ENCODE measurements at regions of chr2 and their contacts with region 1.

Region 1: GRCh38 chr2:43226558-43226954 is at the start of gene ZFP36L2:
- DNase-seq: peak; percentile 97
- H3K4me3 ChIP-seq: peak within 1 kb of the TSS; percentile 89
- H3K27ac ChIP-seq: peak within 1 kb of the TSS; percentile 84
- H3K4me1 ChIP-seq: peaks cover 71% of the 10 kb centered on the region
- CTCF ChIP-seq: no peak
- total RNA-seq, gene ZFP36L2: 6.8 and 7.0 TPM in 2 replicates

Region 2: DNA sequence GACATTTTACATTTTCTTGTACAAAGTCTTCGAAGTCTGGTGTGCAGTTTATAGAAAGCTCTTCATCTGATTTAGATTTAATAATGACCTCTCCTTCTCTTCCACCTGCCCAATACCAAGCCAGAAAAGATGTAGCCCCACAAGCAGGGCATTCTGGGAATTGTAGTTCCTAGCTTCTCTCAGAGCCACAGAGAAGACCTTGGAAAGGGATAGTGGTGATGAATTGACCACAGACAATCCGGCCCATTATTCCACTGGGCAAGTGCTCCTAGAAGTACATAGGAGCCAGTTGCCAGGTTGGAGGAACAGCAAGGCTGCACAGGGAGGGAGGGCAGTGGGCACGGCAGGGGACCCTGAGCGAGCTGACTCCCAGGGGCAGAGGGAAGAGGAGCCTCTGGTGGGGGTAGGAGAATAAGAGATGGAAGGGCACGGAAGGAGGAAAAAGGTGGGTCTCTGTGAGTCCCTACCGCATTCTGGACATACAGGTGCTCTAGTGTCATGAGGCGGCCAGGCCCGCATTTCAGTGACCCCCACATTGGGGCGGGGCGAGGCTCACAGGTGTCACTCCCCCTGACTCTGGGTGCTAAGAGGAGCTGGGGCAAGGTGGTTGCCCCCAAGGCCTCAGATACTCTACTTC is 281.7 kb before region 1 on chr2:
- CTCF ChIA-PET with region 1: interaction called, 6 read pairs
- POLR2A ChIA-PET with region 1: no interaction called
- intact Hi-C with region 1: loop called (anchors 1 kb)
- DNase-seq: no peak
- H3K4me3 ChIP-seq: no peak overlapping the region
- H3K27ac ChIP-seq: no peak overlapping the region
- H3K4me1 ChIP-seq: peaks cover 16% of the 10 kb centered on the region
- CTCF ChIP-seq: no peak

Region 3: GRCh38 chr2:43024515-43025011 is 202.0 kb before region 1 on chr2:
- CTCF ChIA-PET with region 1: interaction called, 3 read pairs
- POLR2A ChIA-PET with region 1: no interaction called
- intact Hi-C with region 1: loop called (anchors 1 kb)
- DNase-seq: peak; percentile 55
- H3K4me3 ChIP-seq: no peak overlapping the region
- H3K27ac ChIP-seq: no peak overlapping the region
- H3K4me1 ChIP-seq: no peaks in the 10 kb centered on the region
- CTCF ChIP-seq: peak; percentile 88

Region 4: DNA sequence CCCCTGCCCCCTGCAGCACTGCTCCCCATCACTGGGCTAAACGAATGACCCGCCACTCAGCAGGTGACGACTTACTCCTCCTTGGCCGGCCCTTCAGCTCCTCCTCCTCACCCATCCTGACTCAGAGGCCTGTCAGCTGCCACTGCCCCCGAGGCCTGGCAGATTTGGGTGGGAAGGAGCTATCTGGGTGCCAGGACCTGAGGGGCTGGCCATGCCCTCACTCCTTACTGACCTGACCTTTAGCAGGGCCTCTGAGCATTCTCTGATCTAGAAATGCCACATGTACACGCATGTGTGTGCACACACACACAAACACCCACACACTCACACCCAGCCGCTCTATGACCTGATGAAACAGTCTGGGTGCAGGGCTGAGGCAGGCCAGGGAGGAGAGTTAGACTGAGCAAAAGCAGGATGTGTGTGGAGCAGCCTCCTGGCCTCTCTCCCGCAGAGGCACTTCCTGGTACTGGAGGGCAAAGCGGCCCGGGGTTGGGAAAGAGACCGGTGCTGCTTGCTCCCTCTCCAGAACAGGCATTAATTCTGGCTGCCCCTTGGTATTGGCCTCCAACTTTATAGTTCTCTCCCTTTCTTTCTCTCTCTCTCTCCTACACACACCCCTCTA is 68.2 kb before region 1 on chr2:
- CTCF ChIA-PET with region 1: no interaction called
- POLR2A ChIA-PET with region 1: no interaction called
- intact Hi-C with region 1: no loop called
- DNase-seq: no peak
- H3K4me3 ChIP-seq: no peak overlapping the region
- H3K27ac ChIP-seq: no peak overlapping the region
- H3K4me1 ChIP-seq: peaks cover 7% of the 10 kb centered on the region
- CTCF ChIP-seq: no peak

Region 5: GRCh38 chr2:43169987-43170386 is 56.6 kb before region 1 on chr2:
- CTCF ChIA-PET with region 1: interaction called, 20 read pairs
- POLR2A ChIA-PET with region 1: interaction called, 13 read pairs
- intact Hi-C with region 1: loop called (anchors 1 kb)
- DNase-seq: peak; percentile 80
- H3K4me3 ChIP-seq: no peak overlapping the region
- H3K27ac ChIP-seq: no peak overlapping the region
- H3K4me1 ChIP-seq: peaks cover 51% of the 10 kb centered on the region
- CTCF ChIP-seq: peak; percentile 94

Region 6: DNA sequence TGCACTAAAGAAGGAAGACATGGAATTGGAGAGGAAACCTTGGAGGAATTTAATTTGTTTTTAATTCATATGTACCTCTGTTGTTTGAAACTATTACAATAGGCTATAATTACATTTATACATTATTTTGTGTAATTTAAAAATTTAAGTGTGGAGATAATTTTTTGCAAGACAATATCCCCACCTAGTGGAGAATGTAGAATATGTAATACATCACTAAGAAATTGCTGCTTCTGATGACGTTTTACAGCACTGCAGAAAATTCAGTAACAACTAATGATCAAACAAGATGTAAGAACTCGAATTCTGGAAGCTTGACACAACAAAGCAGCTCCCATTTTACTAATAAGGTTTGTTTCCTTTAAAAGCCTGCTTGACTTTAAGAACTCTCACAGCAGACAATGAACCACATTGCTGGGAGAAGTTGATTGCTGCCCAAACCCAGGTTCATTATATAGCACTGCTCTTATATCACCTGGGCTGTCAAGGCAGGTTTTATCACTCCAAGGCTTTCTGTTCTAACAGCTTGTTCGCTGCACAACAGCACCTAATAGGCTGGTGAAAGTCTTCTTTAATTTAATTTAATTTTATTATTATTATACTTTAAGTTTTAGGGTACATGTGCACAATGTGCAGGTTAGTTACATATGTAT is 315.9 kb after region 1 on chr2:
- CTCF ChIA-PET with region 1: no interaction called
- POLR2A ChIA-PET with region 1: no interaction called
- intact Hi-C with region 1: loop called (anchors 2 kb)
- DNase-seq: peak; percentile 62
- H3K4me3 ChIP-seq: no peak overlapping the region
- H3K27ac ChIP-seq: no peak overlapping the region
- H3K4me1 ChIP-seq: no peaks in the 10 kb centered on the region
- CTCF ChIP-seq: peak; percentile 90